Endothelial cell of umbilical vein (primary cell): ENCODE measurements at regions of chr14 and their contacts with region 1.

Region 1: DNA sequence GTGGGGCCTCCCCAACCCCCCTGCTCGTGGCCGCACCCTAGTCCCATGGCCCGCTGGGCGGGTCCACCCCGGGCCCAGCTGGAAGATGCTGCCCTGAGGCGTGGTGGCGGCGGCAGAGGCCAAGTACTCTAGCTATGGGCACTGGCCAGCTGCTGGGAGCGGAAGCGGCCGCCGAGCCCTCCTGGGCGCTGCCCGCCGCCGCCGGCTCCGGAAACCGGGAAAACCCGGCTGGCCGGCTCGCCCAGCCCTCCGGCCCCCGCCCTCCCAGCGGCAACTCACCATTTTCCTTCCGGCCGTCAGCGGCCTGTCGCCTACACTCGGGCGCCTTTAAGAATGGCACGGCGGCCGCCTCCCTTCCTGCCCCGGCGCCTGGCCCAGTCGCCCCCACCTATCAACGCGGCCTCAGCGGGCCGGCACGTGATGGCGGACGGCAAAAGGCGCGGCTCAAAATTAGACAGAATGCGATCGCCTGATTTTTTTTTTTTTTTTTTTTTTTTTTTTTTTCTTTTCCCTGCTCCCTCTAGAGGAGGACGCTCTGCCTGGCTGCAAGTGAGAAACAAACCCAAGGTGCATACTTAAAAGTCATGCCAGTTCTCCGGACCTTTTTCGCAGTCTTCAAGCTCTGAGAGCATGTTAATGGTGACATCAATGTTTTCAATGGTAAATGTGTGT is at the start of gene GMFB:
- DNase-seq: peak; percentile 95
- H3K4me3 ChIP-seq: peak within 1 kb of the TSS; percentile 72 to 91 (median 81)
- H3K27ac ChIP-seq: peak within 1 kb of the TSS; percentile 97
- H3K4me1 ChIP-seq: peaks cover 13% of the 10 kb centered on the region
- H3K27me3 ChIP-seq: no peaks in the 10 kb centered on the region
- CTCF ChIP-seq: peak; percentile 28 to 58
- POLR2A ChIP-seq: peak; percentile 95
- total RNA-seq, gene GMFB: 35.5 and 52.0 TPM in 2 replicates

Region 2: DNA sequence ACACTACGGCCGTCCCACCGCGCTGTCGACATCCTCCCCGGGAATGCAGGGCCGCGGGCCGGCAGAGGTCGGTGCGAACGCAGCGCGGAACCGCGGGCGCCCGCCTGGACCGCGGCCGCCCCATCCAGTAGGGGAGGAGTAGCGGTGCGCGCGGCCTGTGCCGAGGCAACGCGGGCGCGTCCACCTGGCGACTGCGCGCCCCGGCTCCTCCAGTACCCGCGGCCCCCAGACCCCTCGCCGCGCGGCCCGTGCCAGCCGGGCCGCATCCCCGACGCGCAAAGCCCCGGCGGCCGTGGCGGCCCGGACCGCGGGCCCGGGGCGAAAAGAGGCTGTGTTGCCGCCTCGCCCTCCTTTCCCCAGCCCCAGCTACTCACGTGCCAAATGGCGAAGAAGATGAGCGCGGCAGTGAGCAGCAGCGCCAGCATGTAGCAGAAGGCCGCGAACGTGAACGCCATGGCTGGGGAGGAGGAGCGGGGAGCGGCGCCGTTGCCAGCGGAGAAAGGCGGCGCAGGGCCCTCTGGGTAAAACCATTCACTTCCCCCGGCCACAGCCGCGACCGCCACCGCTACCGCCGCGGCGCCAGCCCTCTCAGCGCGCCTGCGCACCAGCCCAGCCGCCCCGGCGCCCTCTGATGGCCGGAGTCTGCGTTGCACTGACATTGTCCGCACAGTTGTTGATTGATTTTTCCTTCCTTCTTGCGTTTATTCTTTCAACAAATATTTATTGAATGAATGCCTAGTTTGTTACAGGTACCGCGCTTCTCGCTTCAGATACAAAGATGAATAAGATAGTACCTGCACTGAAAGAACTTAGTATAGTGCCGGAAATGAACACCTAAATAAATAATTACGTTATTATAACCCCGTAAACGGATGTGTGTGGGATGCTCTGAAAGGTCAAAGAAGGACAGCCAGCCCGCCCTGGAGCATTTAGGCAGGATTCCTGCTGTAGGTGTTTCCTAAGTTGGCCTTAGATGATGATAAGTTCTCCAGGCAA is 47.6 kb before region 1 on chr14 and contains the start of gene CNIH1:
- CTCF ChIA-PET with region 1: no interaction called
- POLR2A ChIA-PET with region 1: no interaction called
- dilution Hi-C with region 1: no loop called
- intact Hi-C with region 1: loop called (anchors 1 kb)
- DNase-seq: peak; percentile 94
- H3K4me3 ChIP-seq: peak within 1 kb of the TSS; percentile 50 to 90 (median 70)
- H3K27ac ChIP-seq: peak within 1 kb of the TSS; percentile 83
- H3K4me1 ChIP-seq: peaks cover 18% of the 10 kb centered on the region
- H3K27me3 ChIP-seq: peaks cover 10 to 17% of the 10 kb centered on the region in 2 experiments
- CTCF ChIP-seq: peak; percentile 82 to 95
- POLR2A ChIP-seq: peak; percentile 88
- total RNA-seq, gene CNIH1: 125 and 137 TPM in 2 replicates

Region 3: DNA sequence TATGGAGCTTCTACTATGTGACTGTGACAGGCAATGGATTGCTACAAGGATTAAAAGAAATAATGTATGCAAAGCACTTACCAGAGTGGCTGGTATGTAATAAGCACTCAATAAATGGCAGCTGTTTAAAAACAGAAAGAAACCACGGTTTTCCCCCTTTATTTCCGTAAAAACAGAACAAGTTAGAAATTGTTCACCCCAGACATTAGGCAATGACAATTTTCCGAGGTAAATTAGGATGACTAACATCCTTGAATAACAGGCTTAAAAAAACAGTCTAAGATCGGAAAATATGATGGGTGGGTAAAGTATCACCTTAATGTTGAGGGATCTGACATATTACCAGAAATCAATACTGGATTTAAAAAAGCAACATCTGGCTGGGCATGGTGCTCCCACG is 26.7 kb before region 1 on chr14:
- CTCF ChIA-PET with region 1: no interaction called
- POLR2A ChIA-PET with region 1: no interaction called
- dilution Hi-C with region 1: no loop called
- intact Hi-C with region 1: loop called (anchors 1 kb)
- DNase-seq: peak; percentile 34
- H3K4me3 ChIP-seq: no peak overlapping the region
- H3K27ac ChIP-seq: no peak overlapping the region
- H3K4me1 ChIP-seq: peaks cover 5% of the 10 kb centered on the region
- H3K27me3 ChIP-seq: peaks cover 25 to 29% of the 10 kb centered on the region in 2 experiments
- CTCF ChIP-seq: no peak
- POLR2A ChIP-seq: no peak

Region 4: GRCh38 chr14:54509546-54510501 is 21.0 kb after region 1 on chr14 and contains the start of gene CGRRF1:
- CTCF ChIA-PET with region 1: interaction called, 14 read pairs
- POLR2A ChIA-PET with region 1: interaction called, 4 read pairs
- dilution Hi-C with region 1: no loop called
- intact Hi-C with region 1: loop called (anchors 1 kb)
- DNase-seq: peak; percentile 99
- H3K4me3 ChIP-seq: peak within 1 kb of the TSS; percentile 20 to 92 (median 91)
- H3K27ac ChIP-seq: peak within 1 kb of the TSS; percentile 10
- H3K4me1 ChIP-seq: peaks cover 9% of the 10 kb centered on the region
- H3K27me3 ChIP-seq: no peaks in the 10 kb centered on the region
- CTCF ChIP-seq: peak; percentile 18 to 65
- POLR2A ChIP-seq: peak; percentile 88
- total RNA-seq, gene CGRRF1: 15.7 and 15.8 TPM in 2 replicates